ENCODE measurements at regions of chr12 and their contacts with region 1.

Region 1: DNA sequence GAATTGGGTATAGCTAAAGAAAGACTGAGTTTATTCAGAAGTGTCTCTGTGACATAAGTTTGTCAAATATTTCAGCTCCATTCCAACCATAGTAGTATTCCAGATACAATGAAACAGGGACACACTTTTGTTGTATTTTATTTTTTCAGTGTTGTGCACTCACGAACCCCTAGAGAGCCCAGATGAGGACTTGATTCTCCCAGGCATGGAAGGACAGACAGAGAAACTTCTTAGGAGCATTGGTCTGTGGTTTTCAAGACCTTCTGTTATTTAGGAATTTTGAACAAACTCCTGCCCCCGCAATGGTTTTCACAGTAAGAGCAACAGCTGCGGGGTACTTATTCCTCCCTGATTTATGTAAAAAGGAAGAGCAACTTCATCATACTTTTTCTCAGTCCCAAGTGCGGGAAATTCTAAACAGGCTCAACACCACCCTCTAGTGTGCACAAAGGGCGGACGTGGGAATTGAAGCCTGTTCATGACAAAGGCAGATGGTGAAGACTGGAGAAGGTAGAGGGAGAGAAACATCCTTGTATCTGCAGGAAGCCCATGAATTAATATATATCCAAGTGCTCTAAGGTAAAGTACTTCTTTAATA is 147.6 kb downstream of the PAH start:
- DNase-seq: peak; percentile 39 to 61
- H3K4me3 ChIP-seq: no peak overlapping the region
- H3K4me1 ChIP-seq: no peaks in the 10 kb centered on the region
- H3K27me3 ChIP-seq: no peaks in the 10 kb centered on the region

Region 2: DNA sequence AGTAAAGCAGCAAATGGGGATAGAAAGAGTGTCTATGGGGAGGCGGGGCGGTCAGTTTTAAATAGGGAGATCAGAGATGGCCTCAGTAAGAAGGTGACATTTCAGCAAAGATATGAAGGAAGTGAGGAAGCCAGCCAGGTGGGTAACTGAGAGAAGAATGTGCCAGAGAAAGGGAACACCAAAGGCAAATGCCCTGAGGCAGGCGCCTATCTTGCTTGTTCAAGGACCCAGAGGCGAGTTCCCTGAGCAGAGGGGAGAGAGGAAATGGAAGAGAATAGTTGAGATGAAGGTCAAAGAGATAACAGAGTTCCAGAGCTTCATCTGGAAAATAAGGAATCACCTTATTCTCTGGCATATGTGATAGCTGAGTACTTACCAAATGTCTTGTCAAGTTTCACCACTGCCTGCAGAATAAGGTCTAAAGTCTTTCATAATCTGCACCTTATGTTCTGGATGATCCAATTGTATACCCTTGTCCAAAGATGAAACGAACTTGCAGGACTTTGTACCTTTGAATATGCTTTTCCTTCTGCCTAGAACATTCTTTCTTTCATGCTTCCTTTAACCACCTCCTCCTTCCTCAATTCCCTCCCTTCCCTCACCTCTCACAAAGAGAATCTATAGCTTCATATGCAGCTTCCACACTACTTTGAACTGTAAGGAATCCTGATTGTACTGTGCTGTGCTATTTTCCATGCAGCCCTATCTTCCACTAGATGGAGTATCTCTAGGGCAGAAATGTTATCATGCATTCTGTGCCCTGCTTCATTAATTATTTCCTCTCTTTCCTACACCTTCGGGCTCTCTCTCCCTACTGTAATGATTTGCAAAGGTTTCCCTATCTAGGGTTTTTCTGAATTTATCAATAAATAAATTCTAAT is 977.1 kb before region 1 on chr12:
- in situ Hi-C with region 1: loop called (anchors 25 kb)
- DNase-seq: no peak
- H3K4me3 ChIP-seq: no peak overlapping the region
- H3K4me1 ChIP-seq: no peaks in the 10 kb centered on the region
- H3K27me3 ChIP-seq: no peaks in the 10 kb centered on the region

Region 3: GRCh38 chr12:102879144-102879763 is 109.8 kb after region 1 on chr12:
- in situ Hi-C with region 1: no loop called
- DNase-seq: peak; percentile 57 to 58
- H3K4me3 ChIP-seq: no peak overlapping the region
- H3K4me1 ChIP-seq: no peaks in the 10 kb centered on the region
- H3K27me3 ChIP-seq: no peaks in the 10 kb centered on the region